ENCODE measurements at regions of chr22 and their contacts with region 1.

Region 1: DNA sequence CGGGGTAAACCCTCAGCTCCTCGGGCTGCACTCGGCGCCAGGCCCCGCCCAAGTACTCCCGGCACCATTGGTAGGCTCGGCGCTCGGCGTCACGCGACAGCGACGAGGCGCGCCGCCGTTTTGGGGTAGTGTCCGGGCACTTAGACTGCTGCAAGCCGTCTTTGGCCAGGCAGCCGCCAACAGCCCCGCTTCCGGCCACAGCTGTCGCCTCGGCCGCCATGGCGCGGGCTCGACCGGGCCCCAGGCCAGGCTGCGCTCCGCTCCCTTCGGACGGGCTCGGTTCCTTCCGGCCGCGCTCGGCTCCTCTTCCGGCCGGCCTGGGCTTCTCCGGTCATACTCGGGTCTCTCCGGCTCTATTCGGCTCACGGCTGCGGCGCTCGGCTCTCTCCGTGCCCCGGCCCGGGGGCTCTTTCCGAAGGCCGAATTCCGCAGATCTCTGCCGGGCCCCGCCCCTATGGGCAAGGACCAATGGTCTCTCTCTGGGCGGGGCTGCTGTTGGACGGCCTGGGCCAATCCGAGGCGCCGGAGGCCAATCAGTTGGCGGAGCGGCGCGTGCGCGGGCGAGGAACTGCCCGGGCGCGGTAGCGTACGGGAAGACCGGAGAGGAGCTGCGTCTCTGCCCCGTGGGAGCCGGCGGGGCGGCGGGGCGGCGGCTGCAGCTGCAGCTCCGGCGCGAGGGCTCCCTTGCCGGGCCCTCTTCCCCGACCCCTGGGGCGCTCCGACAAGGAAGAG is at the start of gene CHKB:
- DNase-seq: peak; percentile 96
- ATAC-seq: peak; percentile 94
- H3K4me3 Mint-ChIP-seq: peak within 1 kb of the TSS; percentile 87
- H3K27ac Mint-ChIP-seq: peak within 1 kb of the TSS; percentile 84
- H3K4me1 Mint-ChIP-seq: peaks cover 26% of the 10 kb centered on the region
- H3K27me3 Mint-ChIP-seq: no peaks in the 10 kb centered on the region
- CTCF ChIP-seq: no peak
- total RNA-seq, gene CHKB: 138 and 158 TPM in 2 replicates

Region 2: GRCh38 chr22:50341977-50342650 is 240.6 kb before region 1 on chr22:
- CTCF ChIA-PET with region 1: no interaction called
- POLR2A ChIA-PET with region 1: no interaction called
- intact Hi-C with region 1: loop called (anchors 2 kb)
- DNase-seq: peak; percentile 80
- ATAC-seq: peak; percentile 61
- H3K4me3 Mint-ChIP-seq: peak overlapping the region; percentile 83
- H3K27ac Mint-ChIP-seq: peak overlapping the region; percentile 89
- H3K4me1 Mint-ChIP-seq: peaks cover 12% of the 10 kb centered on the region
- H3K27me3 Mint-ChIP-seq: no peaks in the 10 kb centered on the region
- CTCF ChIP-seq: peak; percentile 91

Region 3: GRCh38 chr22:50474668-50475492 is 107.8 kb before region 1 on chr22 and contains the start of gene SBF1:
- CTCF ChIA-PET with region 1: no interaction called
- POLR2A ChIA-PET with region 1: interaction called, 10 read pairs
- intact Hi-C with region 1: no loop called
- DNase-seq: peak; percentile 89
- ATAC-seq: peak; percentile 79
- H3K4me3 Mint-ChIP-seq: peak within 1 kb of the TSS; percentile 88
- H3K27ac Mint-ChIP-seq: peak within 1 kb of the TSS; percentile 78
- H3K4me1 Mint-ChIP-seq: peaks cover 49% of the 10 kb centered on the region
- H3K27me3 Mint-ChIP-seq: no peaks in the 10 kb centered on the region
- CTCF ChIP-seq: no peak
- total RNA-seq, gene SBF1: 114 and 144 TPM in 2 replicates

Region 4: GRCh38 chr22:50525390-50526068 is 57.2 kb before region 1 on chr22 and contains the start of gene SCO2:
- CTCF ChIA-PET with region 1: interaction called, 9 read pairs
- POLR2A ChIA-PET with region 1: interaction called, 101 read pairs
- intact Hi-C with region 1: loop called (anchors 1 kb)
- DNase-seq: peak; percentile 97
- ATAC-seq: peak; percentile 52
- H3K4me3 Mint-ChIP-seq: peak within 1 kb of the TSS; percentile 84
- H3K27ac Mint-ChIP-seq: peak within 1 kb of the TSS; percentile 90
- H3K4me1 Mint-ChIP-seq: peaks cover 33% of the 10 kb centered on the region
- H3K27me3 Mint-ChIP-seq: no peaks in the 10 kb centered on the region
- CTCF ChIP-seq: no peak
- total RNA-seq, gene SCO2: 7.1 and 11.6 TPM in 2 replicates

Region 5: DNA sequence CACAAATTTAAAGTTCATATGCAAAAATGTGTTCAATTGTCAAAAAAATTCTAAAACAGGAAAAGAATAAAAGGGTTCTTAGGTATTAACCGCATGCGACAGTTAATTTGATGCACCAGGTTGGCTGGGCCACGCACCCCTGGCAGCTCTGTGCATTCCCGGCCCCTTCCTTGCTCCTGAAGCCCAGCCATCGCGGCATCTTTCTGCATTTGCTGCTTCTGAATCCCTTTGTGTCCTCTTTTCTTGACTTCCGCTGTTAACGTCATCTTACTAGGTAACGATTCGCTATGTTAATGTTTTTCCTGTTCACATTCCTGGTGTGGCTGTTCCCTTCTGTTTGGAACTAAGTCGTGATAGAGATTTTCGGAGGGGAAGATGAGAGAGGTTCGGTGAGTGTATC is 45.0 kb before region 1 on chr22:
- CTCF ChIA-PET with region 1: no interaction called
- POLR2A ChIA-PET with region 1: interaction called, 30 read pairs
- intact Hi-C with region 1: no loop called
- DNase-seq: no peak
- ATAC-seq: no peak
- H3K4me3 Mint-ChIP-seq: peak overlapping the region; percentile 13
- H3K27ac Mint-ChIP-seq: peak overlapping the region; percentile 91
- H3K4me1 Mint-ChIP-seq: peaks cover 82% of the 10 kb centered on the region
- H3K27me3 Mint-ChIP-seq: no peaks in the 10 kb centered on the region
- CTCF ChIP-seq: no peak

Region 6: GRCh38 chr22:50562523-50563412 is 20.0 kb before region 1 on chr22 and contains the start of gene SYCE3:
- CTCF ChIA-PET with region 1: interaction called, 5 read pairs
- POLR2A ChIA-PET with region 1: interaction called, 18 read pairs
- intact Hi-C with region 1: loop called (anchors 1 kb)
- DNase-seq: peak; percentile 97
- ATAC-seq: peak; percentile 98
- H3K4me3 Mint-ChIP-seq: peak within 1 kb of the TSS; percentile 95
- H3K27ac Mint-ChIP-seq: peak within 1 kb of the TSS; percentile 81
- H3K4me1 Mint-ChIP-seq: peaks cover 15% of the 10 kb centered on the region
- H3K27me3 Mint-ChIP-seq: peaks cover 1% of the 10 kb centered on the region
- CTCF ChIP-seq: peak; percentile 38
- total RNA-seq, gene SYCE3: not detected in 2 replicates

Region 7: GRCh38 chr22:50627642-50628542 is 45.2 kb after region 1 on chr22 and contains the start of gene ARSA:
- CTCF ChIA-PET with region 1: no interaction called
- POLR2A ChIA-PET with region 1: no interaction called
- intact Hi-C with region 1: loop called (anchors 2 kb)
- DNase-seq: peak; percentile 66
- ATAC-seq: peak; percentile 91
- H3K4me3 Mint-ChIP-seq: peak within 1 kb of the TSS; percentile 85
- H3K27ac Mint-ChIP-seq: peak within 1 kb of the TSS; percentile 60
- H3K4me1 Mint-ChIP-seq: peaks cover 14% of the 10 kb centered on the region
- H3K27me3 Mint-ChIP-seq: no peaks in the 10 kb centered on the region
- CTCF ChIP-seq: no peak
- total RNA-seq, gene ARSA: 49.0 and 50.9 TPM in 2 replicates

Measured in activated B cell treated with CpG ODN at 0.5 μM for 24 hours (primary cell).